Activated CD8-positive, alpha-beta T cell treated with anti-CD3 and anti-CD28 coated beads for 36 hours (primary cell): ENCODE measurements at regions of chr2 and their contacts with region 1.

Region 1: GRCh38 chr2:223993621-223994232 is 36.5 kb downstream of the MRPL44 start:
- DNase-seq: peak; percentile 83
- ATAC-seq: peak; percentile 82
- H3K4me3 Mint-ChIP-seq: no peak overlapping the region
- H3K27ac Mint-ChIP-seq: peak overlapping the region; percentile 18
- H3K4me1 Mint-ChIP-seq: peaks cover 15% of the 10 kb centered on the region
- H3K27me3 Mint-ChIP-seq: no peaks in the 10 kb centered on the region
- CTCF ChIP-seq: peak; percentile 82

Region 2: DNA sequence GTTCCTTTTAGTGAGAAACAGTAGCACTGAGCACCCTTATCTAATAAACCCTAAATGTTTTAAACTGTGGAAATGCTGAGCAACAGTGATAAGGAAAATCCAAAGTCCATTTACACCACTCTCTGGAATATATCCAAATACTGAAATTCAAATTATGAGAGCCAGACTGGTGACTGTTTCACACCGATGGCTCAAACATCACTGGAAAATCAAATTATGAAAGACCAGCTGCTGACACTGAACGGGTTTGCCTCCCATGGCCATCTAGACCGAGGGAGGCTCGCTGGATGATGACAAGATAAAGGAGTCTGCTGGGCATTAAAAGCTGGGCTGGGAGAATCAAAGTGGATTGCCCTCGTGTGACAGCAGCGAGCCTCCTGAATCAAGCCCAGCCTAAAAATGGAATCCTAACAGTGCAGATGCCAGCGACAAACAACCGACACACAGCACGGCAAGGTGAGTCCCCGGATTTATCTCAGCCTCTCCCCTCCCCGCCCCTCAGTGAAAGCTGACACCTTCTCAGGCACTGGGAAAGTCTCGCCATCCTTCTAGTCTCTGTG is 15.1 kb after region 1 on chr2:
- CTCF ChIA-PET with region 1: interaction called, 71 read pairs
- POLR2A ChIA-PET with region 1: no interaction called
- intact Hi-C with region 1: no loop called
- DNase-seq: no peak
- ATAC-seq: no peak
- H3K4me3 Mint-ChIP-seq: no peak overlapping the region
- H3K27ac Mint-ChIP-seq: no peak overlapping the region
- H3K4me1 Mint-ChIP-seq: peaks cover 7% of the 10 kb centered on the region
- H3K27me3 Mint-ChIP-seq: no peaks in the 10 kb centered on the region
- CTCF ChIP-seq: no peak

Region 3: DNA sequence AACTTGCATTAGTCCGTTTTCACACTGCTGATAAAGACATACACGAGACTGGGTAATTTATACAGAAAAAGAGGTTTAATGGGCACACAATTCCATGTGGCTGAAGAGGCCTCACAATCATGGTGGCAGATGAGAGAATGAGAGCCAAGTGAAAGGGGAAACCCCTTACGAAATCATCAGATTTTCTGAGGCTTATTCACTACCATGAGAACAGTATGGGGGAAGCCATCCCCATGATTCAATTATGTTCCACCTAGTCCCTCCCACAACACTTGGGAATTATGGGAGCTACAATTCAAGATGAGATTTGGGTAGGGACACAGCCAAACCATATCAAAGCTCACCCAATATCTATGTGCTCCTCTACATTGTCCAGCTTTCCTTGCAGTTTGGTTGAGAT is 61.4 kb after region 1 on chr2:
- CTCF ChIA-PET with region 1: interaction called, 27 read pairs
- POLR2A ChIA-PET with region 1: interaction called, 3 read pairs
- intact Hi-C with region 1: no loop called
- DNase-seq: no peak
- ATAC-seq: no peak
- H3K4me3 Mint-ChIP-seq: no peak overlapping the region
- H3K27ac Mint-ChIP-seq: no peak overlapping the region
- H3K4me1 Mint-ChIP-seq: peaks cover 2% of the 10 kb centered on the region
- H3K27me3 Mint-ChIP-seq: peaks cover 19% of the 10 kb centered on the region
- CTCF ChIP-seq: no peak

Region 4: DNA sequence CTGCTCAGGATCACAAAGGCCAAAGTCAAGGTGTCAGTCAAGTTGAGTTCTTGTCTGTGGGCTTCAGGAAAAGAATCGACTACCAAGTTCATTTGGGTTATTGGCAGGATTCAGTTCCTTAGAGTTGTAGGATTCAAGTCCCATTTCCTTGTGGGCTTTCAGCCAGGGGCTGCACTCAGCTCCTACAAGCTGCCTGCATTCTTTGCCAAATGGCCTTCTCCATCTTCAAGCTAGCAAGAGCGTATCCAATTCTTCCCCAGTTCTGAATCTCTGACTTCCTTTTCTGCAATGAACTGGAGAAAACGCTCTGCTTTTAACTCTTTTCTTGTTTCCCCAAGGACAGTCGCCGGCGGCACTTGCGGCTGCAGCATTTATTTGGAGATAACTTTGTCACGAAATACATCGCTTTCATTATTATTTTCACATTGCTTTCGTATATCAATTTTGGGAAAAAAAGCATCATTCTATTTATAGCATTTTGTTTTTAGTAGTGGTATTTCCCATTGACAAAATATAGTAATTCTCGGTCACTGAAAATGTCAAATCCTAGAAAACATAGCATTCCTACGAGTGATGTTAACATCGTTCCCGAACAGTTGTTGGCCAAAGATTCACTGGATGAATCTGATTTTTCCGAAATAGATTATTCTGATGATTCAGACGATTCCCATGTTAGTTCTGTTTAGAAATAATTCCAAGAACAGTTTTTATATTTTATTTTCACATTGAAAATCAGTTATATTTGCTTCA is 104.9 kb after region 1 on chr2:
- CTCF ChIA-PET with region 1: interaction called, 14 read pairs
- POLR2A ChIA-PET with region 1: no interaction called
- intact Hi-C with region 1: no loop called
- DNase-seq: no peak
- ATAC-seq: no peak
- H3K4me3 Mint-ChIP-seq: no peak overlapping the region
- H3K27ac Mint-ChIP-seq: no peak overlapping the region
- H3K4me1 Mint-ChIP-seq: peaks cover 4% of the 10 kb centered on the region
- H3K27me3 Mint-ChIP-seq: peaks cover 11% of the 10 kb centered on the region
- CTCF ChIP-seq: no peak

Region 5: DNA sequence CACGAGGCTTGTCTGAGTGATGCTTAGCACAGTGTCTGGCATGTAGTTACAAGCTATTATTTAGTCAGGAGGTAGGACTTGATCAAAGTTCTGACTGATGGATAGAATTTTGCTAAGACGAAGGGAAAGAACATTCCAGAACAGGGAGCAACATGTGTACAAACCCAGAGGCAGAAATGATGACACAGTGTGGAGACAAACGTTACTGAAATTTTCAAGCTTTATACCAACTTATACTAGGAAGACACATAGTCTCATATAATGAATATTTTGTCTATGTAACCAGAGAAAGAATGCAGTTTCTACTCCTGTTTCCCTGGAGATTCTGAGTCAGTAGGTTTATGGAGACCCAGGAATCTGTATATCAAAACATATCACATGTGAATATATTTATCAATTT is 284.8 kb after region 1 on chr2:
- CTCF ChIA-PET with region 1: interaction called, 156 read pairs
- POLR2A ChIA-PET with region 1: interaction called, 4 read pairs
- intact Hi-C with region 1: no loop called
- DNase-seq: no peak
- ATAC-seq: no peak
- H3K4me3 Mint-ChIP-seq: no peak overlapping the region
- H3K27ac Mint-ChIP-seq: no peak overlapping the region
- H3K4me1 Mint-ChIP-seq: no peaks in the 10 kb centered on the region
- H3K27me3 Mint-ChIP-seq: peaks cover 8% of the 10 kb centered on the region
- CTCF ChIP-seq: no peak